ENCODE measurements at regions of chr1 and their contacts with region 1.

Region 1: DNA sequence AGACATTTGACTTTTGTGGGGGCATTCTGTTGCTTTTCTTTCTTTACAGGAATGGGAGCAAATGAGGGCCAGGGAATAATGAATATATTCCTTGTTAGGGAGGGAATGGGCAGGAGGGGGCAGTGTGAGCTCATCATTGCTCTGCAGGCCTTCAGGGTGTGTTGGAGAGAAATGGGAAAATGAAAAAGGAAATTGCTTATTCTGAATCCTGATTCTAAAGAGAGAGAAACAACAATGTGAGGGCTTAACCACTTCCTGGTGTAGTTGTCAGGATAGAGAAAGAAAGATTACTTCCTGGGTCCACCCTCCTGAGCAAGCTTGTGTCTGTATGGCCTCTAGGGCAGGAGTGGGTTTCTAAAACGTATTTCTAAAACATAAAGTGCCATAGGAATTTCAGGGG is 28.3 kb downstream of the VANGL2 start:
- DNase-seq: peak; percentile 3
- H3K4me3 ChIP-seq: no peak overlapping the region
- H3K27ac ChIP-seq: no peak overlapping the region
- H3K27me3 ChIP-seq: no peaks in the 10 kb centered on the region
- CTCF ChIP-seq: peak; percentile 62

Region 2: GRCh38 chr1:160449494-160449893 is 20.8 kb after region 1 on chr1:
- CTCF ChIA-PET with region 1: no interaction called
- POLR2A ChIA-PET with region 1: no interaction called
- DNase-seq: no peak
- H3K4me3 ChIP-seq: no peak overlapping the region
- H3K27ac ChIP-seq: no peak overlapping the region
- H3K27me3 ChIP-seq: no peaks in the 10 kb centered on the region
- CTCF ChIP-seq: no peak

Region 3: GRCh38 chr1:160607011-160607671 is 178.5 kb after region 1 on chr1:
- CTCF ChIA-PET with region 1: interaction called, 23 read pairs
- POLR2A ChIA-PET with region 1: no interaction called
- DNase-seq: peak; percentile 41
- H3K4me3 ChIP-seq: no peak overlapping the region
- H3K27ac ChIP-seq: no peak overlapping the region
- H3K27me3 ChIP-seq: peaks cover 2% of the 10 kb centered on the region
- CTCF ChIP-seq: peak; percentile 78